ENCODE measurements at regions of chr10 and their contacts with region 1.

Region 1: DNA sequence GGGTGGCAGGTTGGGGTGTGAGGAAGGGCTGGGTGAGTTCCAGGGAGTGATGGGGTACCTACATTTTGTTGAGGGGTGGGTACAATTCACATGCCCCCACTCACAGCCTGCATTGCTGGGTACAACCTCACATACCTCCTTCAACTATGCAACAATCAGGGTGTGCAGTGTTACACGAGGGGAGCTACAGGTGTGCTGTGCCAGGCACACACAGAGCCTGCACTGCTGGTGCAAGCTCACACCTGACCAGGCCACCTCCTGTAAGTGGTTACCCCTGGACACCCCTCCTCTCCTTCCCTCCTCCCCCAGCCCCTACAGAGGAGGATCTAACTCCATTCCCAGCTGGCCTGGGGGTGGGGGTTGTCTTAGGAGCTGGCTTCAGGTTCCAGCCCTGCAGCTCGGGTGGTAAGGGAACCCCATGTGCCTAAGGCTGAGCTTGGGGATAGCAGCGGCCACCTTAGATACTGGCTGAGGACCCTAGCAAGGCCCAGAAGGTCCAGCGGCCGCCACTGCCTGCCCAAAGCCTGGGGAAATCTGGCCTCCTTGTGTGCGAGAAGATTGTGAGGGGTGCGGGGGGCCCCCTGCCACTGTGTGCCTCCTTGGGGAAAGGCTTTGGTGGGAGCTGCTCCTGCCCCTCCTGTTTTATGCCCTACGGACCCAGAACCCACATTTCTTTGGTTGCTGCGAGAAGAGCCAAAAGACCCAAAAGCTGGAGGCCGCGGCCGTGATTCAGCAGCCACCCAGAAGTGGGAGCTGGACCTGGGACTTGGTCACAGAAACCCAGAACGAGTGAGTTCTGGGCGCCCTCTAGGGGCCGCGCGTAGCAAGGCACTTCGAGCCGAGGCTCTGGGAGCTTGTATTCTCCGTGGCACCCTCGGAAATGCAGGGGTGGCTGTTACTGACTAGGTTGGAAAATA is 10.8 kb downstream of the TLX1 start:
- DNase-seq: peak; percentile 74 to 82
- ATAC-seq: peak; percentile 78 to 94 (median 86)
- H3K4me3 ChIP-seq: no peak overlapping the region
- H3K27ac ChIP-seq: no peak overlapping the region
- H3K4me1 ChIP-seq: peaks cover 0 to 32% (median 25%) of the 10 kb centered on the region in 9 donors
- H3K27me3 ChIP-seq: peaks cover 46 to 100% (median 99%) of the 10 kb centered on the region in 7 donors
- CTCF ChIP-seq: peak; percentile 87 to 98 (median 97)

Region 2: GRCh38 chr10:101042667-101043355 is 99.1 kb before region 1 on chr10:
- intact Hi-C with region 1: loop called in 4 of 10 experiments (anchors 5 to 10 kb)
- DNase-seq: peak; percentile 95 to 97
- ATAC-seq: peak; percentile 92 to 97 (median 95)
- H3K4me3 ChIP-seq: peak overlapping the region; percentile 21 to 59 (median 53)
- H3K27ac ChIP-seq: peak overlapping the region; percentile 47 to 91 (median 84)
- H3K4me1 ChIP-seq: peaks cover 3 to 28% (median 16%) of the 10 kb centered on the region in 9 donors
- H3K27me3 ChIP-seq: peaks cover 0 to 28% (median 16%) of the 10 kb centered on the region in 7 donors
- CTCF ChIP-seq: no peak

Region 3: DNA sequence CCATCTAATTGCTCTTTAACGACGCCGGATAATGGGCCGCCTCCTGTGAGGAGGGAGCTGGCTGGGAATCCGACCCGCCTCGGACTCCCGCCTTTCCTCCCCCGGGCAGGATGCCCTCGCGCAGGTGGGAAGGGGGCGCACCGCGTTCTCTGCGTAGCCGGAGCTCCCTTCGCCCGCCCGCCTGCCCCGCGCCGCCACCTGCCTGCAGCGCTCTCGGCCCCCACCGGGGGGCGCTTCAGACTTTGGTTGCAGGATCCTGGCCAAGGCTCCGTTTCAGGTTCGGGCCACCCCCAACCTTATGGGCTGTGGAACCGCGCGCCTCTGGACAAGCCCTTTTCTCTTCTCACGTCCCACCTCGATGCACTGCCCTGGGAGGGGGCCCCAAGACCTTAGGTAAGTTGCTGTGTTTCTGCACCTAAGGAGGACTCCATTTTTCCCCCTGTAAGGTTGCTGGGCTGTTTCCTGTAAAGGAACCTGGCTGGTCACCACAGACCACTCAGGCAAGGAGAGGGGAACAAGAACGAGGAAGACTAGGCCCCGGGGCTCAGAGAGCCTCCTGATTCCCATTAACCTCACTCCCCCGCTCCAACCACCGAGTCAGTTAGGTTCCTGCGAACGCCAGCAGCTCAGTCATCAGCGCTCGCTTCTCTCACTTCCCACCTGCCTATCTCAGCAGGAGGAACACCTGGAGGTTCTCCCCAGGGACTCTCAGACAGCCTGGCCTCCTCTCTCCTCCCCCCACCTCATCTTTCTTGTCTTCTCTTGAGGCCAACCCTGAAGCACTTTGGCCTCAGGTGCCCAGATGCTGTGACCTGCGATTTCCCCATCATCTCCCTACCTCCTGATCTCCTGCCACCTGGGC is 91.4 kb before region 1 on chr10:
- intact Hi-C with region 1: loop called in 4 of 10 experiments (anchors 2 to 10 kb)
- DNase-seq: peak; percentile 47 to 60
- ATAC-seq: peak in 7 of 8 donors; percentile 35 to 67 (median 56)
- H3K4me3 ChIP-seq: peak overlapping the region in 4 of 10 donors; percentile 12 to 26 (median 19)
- H3K27ac ChIP-seq: no peak overlapping the region
- H3K4me1 ChIP-seq: peaks cover 0 to 17% (median 8%) of the 10 kb centered on the region in 9 donors
- H3K27me3 ChIP-seq: peaks cover 12 to 63% (median 50%) of the 10 kb centered on the region in 7 donors
- CTCF ChIP-seq: peak; percentile 52 to 88 (median 81)

Region 4: GRCh38 chr10:101060036-101060950 is 81.6 kb before region 1 on chr10:
- intact Hi-C with region 1: loop called in 4 of 10 experiments (anchors 2 to 10 kb)
- DNase-seq: peak; percentile 93 to 96
- ATAC-seq: peak; percentile 61 to 85 (median 76)
- H3K4me3 ChIP-seq: peak overlapping the region; percentile 52 to 90 (median 76)
- H3K27ac ChIP-seq: peak overlapping the region; percentile 92 to 99 (median 98)
- H3K4me1 ChIP-seq: peaks cover 6 to 52% (median 43%) of the 10 kb centered on the region in 9 donors
- H3K27me3 ChIP-seq: peaks cover 0 to 38% (median 0%) of the 10 kb centered on the region in 7 donors
- CTCF ChIP-seq: peak; percentile 67 to 95 (median 89)

Region 5: DNA sequence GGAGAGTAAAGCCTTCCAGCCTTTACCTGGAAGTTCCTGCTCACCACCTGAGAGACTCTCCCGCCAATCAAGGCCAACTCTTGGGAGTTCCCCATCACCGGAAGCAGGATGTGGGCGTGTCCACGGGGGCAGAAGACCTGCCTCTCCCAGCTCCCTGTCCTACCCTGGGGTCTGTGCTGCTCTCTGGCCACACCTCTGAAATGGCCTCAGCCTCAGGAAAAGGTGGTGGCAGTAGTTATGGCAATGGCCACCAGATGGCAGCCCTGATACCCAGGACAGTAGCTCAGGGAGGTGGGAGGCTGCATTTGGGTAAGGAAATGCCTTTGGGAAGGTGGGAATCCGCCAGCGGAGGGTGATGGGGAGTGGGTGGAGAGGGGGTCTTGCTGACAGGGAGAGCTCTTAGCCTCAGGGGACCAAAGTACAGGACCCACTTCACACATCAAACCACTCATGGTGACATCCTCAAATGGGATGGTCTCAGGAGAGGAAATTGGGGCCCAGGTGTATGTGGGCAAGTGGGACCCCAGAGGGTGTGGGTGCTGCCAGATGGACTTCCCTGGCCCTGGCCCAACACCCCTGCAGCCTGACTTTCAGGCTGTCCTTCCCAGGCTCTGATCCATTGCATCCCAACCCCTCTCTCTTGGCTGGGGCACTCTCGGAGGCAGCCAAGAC is 46.2 kb before region 1 on chr10:
- intact Hi-C with region 1: loop called (anchors 1 to 5 kb)
- DNase-seq: peak; percentile 46 to 55
- ATAC-seq: peak in 7 of 8 donors; percentile 46 to 78 (median 65)
- H3K4me3 ChIP-seq: no peak overlapping the region
- H3K27ac ChIP-seq: no peak overlapping the region
- H3K4me1 ChIP-seq: no peaks in the 10 kb centered on the region
- H3K27me3 ChIP-seq: peaks cover 0 to 93% (median 86%) of the 10 kb centered on the region in 7 donors
- CTCF ChIP-seq: peak; percentile 61 to 83 (median 73)

Measured in heart right ventricle (tissue), 16 donors.